Pancreas (tissue), 10 donors: ENCODE measurements at regions of chr19 and their contacts with region 1.

Region 1: DNA sequence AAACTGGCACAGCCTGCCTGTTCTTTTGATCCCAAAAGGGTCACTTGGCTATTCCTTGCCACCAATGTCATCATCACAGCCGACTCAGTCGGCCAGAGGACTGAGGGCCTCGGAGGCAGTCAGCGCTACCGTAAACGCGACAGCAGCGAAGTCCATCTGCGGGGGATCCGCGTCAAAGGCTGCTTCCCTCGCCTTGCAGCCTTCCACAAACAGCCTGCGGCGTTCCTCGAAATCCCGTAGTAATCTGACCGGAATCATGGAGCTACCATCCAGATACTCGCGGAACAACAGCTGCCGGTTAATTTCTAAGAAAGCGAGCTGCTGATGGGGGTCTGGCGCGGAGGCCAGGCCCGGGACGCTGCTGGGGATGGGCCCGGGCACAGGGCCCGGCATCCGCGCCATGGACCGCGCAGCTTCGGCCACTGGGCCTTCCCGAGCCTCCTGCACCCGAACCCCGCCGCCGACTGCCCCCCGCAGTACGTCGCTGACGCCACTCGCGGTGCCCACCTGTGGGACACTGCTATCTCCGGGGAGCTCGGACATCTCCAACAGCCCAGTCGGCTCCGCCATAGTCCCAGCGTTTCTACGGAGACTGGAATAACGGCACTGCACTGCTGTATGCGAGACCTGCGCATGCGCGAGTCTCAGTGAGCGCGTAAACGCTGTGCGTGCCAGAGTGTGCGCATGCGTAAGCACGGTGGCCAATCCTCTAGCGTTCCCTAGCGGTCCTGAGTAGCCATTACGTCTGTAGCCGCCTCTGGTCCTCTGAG is at the start of gene EID2B:
- DNase-seq: peak; percentile 89 to 99 (median 96)
- ATAC-seq: peak; percentile 98 to 99 (median 98)
- H3K4me3 ChIP-seq: peak within 1 kb of the TSS; percentile 75 to 92 (median 88)
- H3K27ac ChIP-seq: peak within 1 kb of the TSS in 2 of 4 donors; percentile 42 to 57
- H3K4me1 ChIP-seq: peaks cover 0 to 8% (median 4%) of the 10 kb centered on the region in 3 donors
- H3K27me3 ChIP-seq: no peaks in the 10 kb centered on the region
- CTCF ChIP-seq: peak; percentile 95 to 97 (median 96)
- total RNA-seq, gene EID2B: 0.63 to 1.1 (median 0.80) TPM

Region 2: DNA sequence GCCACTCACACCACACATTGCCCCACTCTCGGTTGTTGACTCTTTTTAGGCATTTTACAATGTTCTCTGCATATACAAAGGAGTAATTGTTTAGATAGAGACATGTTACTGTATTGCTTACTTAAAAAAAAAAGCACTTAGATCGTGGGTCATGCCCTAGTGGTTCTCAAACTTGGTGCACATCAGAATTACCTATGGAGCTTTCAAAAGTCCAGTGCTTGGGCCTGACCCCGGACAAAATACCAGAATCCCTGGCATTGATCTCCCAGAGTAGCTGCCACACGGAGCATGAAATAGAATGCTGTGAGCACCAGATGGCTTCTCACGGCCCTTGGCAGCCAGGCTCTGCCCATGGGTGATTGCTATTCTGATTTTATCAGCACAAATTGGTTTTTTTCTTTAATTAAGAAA is 428.2 kb before region 1 on chr19:
- intact Hi-C with region 1: loop called in 1 of 3 experiments (anchors 10 kb)
- DNase-seq: no peak
- ATAC-seq: no peak
- H3K4me3 ChIP-seq: no peak overlapping the region
- H3K27ac ChIP-seq: no peak overlapping the region
- H3K4me1 ChIP-seq: no peaks in the 10 kb centered on the region
- H3K27me3 ChIP-seq: no peaks in the 10 kb centered on the region
- CTCF ChIP-seq: no peak

Region 3: GRCh38 chr19:39390755-39391592 is 141.4 kb before region 1 on chr19 and contains the starts of genes MED29 and PAF1:
- intact Hi-C with region 1: loop called in 1 of 3 experiments (anchors 10 kb)
- DNase-seq: peak; percentile 89 to 99 (median 98)
- ATAC-seq: peak; percentile 93 to 97 (median 96)
- H3K4me3 ChIP-seq: peak within 1 kb of the TSS; percentile 57 to 97 (median 71)
- H3K27ac ChIP-seq: peak within 1 kb of the TSS; percentile 91 to 99 (median 94)
- H3K4me1 ChIP-seq: peaks cover 0 to 8% (median 4%) of the 10 kb centered on the region in 3 donors
- H3K27me3 ChIP-seq: no peaks in the 10 kb centered on the region
- CTCF ChIP-seq: no peak
- total RNA-seq, gene MED29: 15.2 to 23.9 (median 17.5) TPM
- total RNA-seq, gene PAF1: 11.3 to 17.7 (median 14.6) TPM

Region 4: GRCh38 chr19:39445265-39446111 is 86.9 kb before region 1 on chr19 and contains the start of gene SUPT5H:
- intact Hi-C with region 1: loop called in 1 of 3 experiments (anchors 10 kb)
- DNase-seq: peak; percentile 96 to 99 (median 97)
- ATAC-seq: peak; percentile 96 to 99 (median 98)
- H3K4me3 ChIP-seq: peak within 1 kb of the TSS; percentile 68 to 99 (median 90)
- H3K27ac ChIP-seq: peak within 1 kb of the TSS; percentile 74 to 91 (median 85)
- H3K4me1 ChIP-seq: peaks cover 7 to 29% (median 17%) of the 10 kb centered on the region in 3 donors
- H3K27me3 ChIP-seq: no peaks in the 10 kb centered on the region
- CTCF ChIP-seq: no peak
- total RNA-seq, gene SUPT5H: 49.3 to 69.6 (median 54.0) TPM

Region 5: GRCh38 chr19:39483141-39483540 is 49.3 kb before region 1 on chr19:
- intact Hi-C with region 1: no loop called
- DNase-seq: no peak
- ATAC-seq: no peak
- H3K4me3 ChIP-seq: no peak overlapping the region
- H3K27ac ChIP-seq: no peak overlapping the region
- H3K4me1 ChIP-seq: peaks cover 0 to 8% (median 8%) of the 10 kb centered on the region in 3 donors
- H3K27me3 ChIP-seq: no peaks in the 10 kb centered on the region
- CTCF ChIP-seq: no peak